ENCODE measurements at regions of chr1 and their contacts with region 1.

Region 1: DNA sequence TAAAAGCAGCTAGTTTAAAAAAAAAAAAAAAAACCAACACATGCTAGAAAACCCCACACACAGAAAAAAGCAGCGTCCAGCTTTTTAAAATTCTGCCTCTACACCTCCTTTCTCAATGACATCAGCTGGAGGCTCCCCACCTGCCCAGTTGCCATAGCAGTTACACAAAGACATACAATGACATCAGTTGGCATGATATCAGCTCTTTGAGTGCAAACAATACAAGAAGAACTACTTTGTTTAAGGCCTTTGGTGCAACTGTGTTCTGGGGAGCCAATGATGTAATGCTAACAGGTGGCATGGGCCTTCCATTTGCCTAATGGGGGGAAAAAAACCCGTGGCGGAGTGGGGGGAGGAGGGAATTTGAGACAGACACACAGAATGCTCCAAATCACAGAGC is 32.9 kb downstream of the DUSP10 start:
- DNase-seq: peak; percentile 41
- H3K4me3 Mint-ChIP-seq: no peak overlapping the region
- H3K27ac Mint-ChIP-seq: peak overlapping the region; percentile 76
- H3K4me1 Mint-ChIP-seq: peaks cover 74% of the 10 kb centered on the region
- H3K27me3 Mint-ChIP-seq: no peaks in the 10 kb centered on the region

Region 2: GRCh38 chr1:221725735-221726672 is 17.0 kb after region 1 on chr1:
- CTCF ChIA-PET with region 1: interaction called, 22 read pairs
- POLR2A ChIA-PET with region 1: interaction called, 74 read pairs
- DNase-seq: no peak
- H3K4me3 Mint-ChIP-seq: peak overlapping the region; percentile 39
- H3K27ac Mint-ChIP-seq: peak overlapping the region; percentile 88
- H3K4me1 Mint-ChIP-seq: peaks cover 73% of the 10 kb centered on the region
- H3K27me3 Mint-ChIP-seq: no peaks in the 10 kb centered on the region

Region 3: GRCh38 chr1:221777431-221778072 is 68.6 kb after region 1 on chr1:
- CTCF ChIA-PET with region 1: interaction called, 3 read pairs
- POLR2A ChIA-PET with region 1: interaction called, 20 read pairs
- DNase-seq: peak; percentile 67
- H3K4me3 Mint-ChIP-seq: peak overlapping the region; percentile 42
- H3K27ac Mint-ChIP-seq: peak overlapping the region; percentile 91
- H3K4me1 Mint-ChIP-seq: peaks cover 75% of the 10 kb centered on the region
- H3K27me3 Mint-ChIP-seq: no peaks in the 10 kb centered on the region

Region 4: GRCh38 chr1:221783936-221784335 is 74.9 kb after region 1 on chr1:
- CTCF ChIA-PET with region 1: no interaction called
- POLR2A ChIA-PET with region 1: interaction called, 20 read pairs
- DNase-seq: no peak
- H3K4me3 Mint-ChIP-seq: no peak overlapping the region
- H3K27ac Mint-ChIP-seq: peak overlapping the region; percentile 66
- H3K4me1 Mint-ChIP-seq: peaks cover 57% of the 10 kb centered on the region
- H3K27me3 Mint-ChIP-seq: no peaks in the 10 kb centered on the region

Region 5: DNA sequence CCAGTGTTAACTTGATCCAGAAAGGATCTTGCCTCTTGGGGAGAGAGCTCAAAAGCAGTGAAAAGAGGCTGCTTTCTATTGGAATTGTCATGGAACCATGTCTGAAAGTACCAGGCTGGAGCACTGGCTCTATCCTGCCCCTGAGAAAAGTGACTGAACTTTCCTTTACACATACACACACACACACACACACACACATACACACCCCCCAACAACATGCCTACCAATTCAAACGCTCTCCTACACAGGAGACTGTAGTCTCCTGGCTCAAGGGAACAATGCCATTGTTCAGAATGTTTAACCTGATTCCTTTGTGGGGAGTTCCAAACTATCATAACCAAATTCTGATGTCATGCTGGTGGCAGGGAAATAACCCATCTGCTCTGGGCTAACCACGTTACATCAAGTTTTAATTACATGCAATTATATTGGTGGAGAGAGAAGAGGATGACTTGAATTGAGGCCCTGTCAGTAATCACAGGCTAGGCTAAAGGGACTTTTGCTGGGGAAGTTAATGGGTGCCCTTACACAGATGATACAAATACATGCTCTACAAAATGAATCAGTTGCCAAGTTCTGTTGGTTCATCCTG is 85.2 kb after region 1 on chr1:
- CTCF ChIA-PET with region 1: no interaction called
- POLR2A ChIA-PET with region 1: no interaction called
- DNase-seq: no peak
- H3K4me3 Mint-ChIP-seq: no peak overlapping the region
- H3K27ac Mint-ChIP-seq: no peak overlapping the region
- H3K4me1 Mint-ChIP-seq: peaks cover 25% of the 10 kb centered on the region
- H3K27me3 Mint-ChIP-seq: no peaks in the 10 kb centered on the region

Region 6: DNA sequence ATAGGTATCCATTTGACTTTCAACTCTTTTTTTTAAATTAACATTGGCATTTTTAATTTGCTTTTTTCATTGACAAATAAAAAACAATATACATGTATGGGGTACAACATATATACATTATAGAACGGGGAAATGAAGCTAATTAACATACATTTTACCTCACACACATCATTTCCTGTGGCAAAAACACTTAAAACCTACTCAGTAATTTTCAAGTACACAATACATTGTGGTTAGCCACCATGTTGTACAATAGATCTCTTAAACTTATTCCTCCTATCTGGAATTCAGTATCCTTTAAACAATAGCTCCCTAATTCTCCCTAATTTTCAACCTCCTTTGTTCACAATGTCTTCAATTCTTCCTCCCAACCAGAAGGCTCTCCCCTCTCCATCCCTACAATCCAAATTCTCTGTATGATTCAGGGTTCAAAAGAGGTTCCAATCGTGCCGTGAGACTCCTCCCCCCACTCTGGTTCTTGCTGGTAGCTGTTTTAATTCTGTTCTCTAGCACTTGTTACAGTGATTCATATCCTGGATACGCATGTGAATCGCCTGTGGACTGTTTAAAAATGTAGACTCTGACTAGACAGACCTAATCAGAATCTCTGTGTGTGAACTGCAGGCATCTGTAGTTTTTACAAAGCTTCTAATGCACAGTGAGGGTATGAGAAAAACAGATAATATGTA is 120.5 kb after region 1 on chr1:
- CTCF ChIA-PET with region 1: no interaction called
- POLR2A ChIA-PET with region 1: interaction called, 20 read pairs
- DNase-seq: peak; percentile 73
- H3K4me3 Mint-ChIP-seq: peak overlapping the region; percentile 55
- H3K27ac Mint-ChIP-seq: peak overlapping the region; percentile 95
- H3K4me1 Mint-ChIP-seq: peaks cover 80% of the 10 kb centered on the region
- H3K27me3 Mint-ChIP-seq: no peaks in the 10 kb centered on the region

Measured in activated CD4-positive, alpha-beta memory T cell treated with anti-CD3 and anti-CD28 coated beads, Interleukin-2, amount 10 ng/mL, durations not matched to agents 7 days and 5 days (primary cell).